Activated T-helper 1 cell treated with anti-CD3 and anti-CD28 coated beads, Interleukin-12 subunit alpha, Interleukin-12 subunit beta, Interleukin-2, Interleukin-4 antibody, amounts not matched to agents 30 ng/mL and 10 ng/mL and 1 ng/mL, durations not matched to agents 14 hours and 24 hours and 36 hours (primary cell): ENCODE measurements at regions of chr2 and their contacts with region 1.

Region 1: GRCh38 chr2:218033590-218034496 is 31.0 kb upstream of the TNS1 start:
- DNase-seq: no peak
- H3K4me3 Mint-ChIP-seq: peak overlapping the region; percentile 53
- H3K27ac Mint-ChIP-seq: no peak overlapping the region
- H3K4me1 Mint-ChIP-seq: peaks cover 3% of the 10 kb centered on the region
- H3K27me3 Mint-ChIP-seq: peaks cover 2% of the 10 kb centered on the region

Region 2: GRCh38 chr2:217886720-217887309 is 147.0 kb before region 1 on chr2:
- intact Hi-C with region 1: loop called (anchors 5 kb)
- DNase-seq: peak; percentile 33
- H3K4me3 Mint-ChIP-seq: no peak overlapping the region
- H3K27ac Mint-ChIP-seq: no peak overlapping the region
- H3K4me1 Mint-ChIP-seq: no peaks in the 10 kb centered on the region
- H3K27me3 Mint-ChIP-seq: peaks cover 5% of the 10 kb centered on the region

Region 3: DNA sequence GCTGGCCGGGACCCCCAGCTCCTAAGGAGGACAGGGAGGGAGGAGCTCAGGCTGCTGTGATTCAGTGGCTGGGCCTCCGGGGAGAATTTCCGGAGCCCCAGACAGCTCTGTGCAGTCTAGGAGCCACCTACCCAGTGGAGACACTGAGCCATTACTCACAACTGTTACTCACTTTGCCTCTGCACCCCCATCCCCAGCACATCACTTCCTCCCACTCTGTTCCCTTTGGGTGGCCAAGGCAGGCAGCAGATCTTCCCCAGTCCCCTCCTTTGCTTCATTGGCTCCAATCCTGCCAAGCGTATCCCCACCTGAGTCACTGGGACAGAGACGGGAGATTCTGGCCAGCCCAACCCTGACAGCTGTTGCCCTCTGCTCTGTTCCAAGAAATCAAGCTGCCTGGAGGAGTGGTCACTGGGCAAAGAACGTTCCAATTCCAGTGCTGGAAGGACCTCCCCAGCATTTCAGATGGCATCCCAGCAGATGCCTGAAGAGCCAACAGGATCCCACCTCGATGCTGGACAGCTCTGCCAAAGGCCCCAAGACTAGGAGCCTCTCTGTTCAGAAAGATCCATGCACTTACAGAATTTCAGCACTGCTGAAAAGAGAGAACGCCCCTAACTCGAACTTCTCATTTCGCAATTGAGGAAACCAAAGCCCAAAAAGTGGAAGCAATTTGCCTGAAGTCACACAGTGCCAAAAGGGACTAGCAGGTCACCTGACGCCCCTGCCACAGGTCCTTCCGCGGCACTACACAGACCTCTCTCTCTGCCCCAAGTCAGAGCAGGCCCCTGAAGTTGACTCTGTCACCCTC is 99.3 kb before region 1 on chr2:
- intact Hi-C with region 1: no loop called
- DNase-seq: no peak
- H3K4me3 Mint-ChIP-seq: no peak overlapping the region
- H3K27ac Mint-ChIP-seq: no peak overlapping the region
- H3K4me1 Mint-ChIP-seq: peaks cover 16% of the 10 kb centered on the region
- H3K27me3 Mint-ChIP-seq: no peaks in the 10 kb centered on the region

Region 4: DNA sequence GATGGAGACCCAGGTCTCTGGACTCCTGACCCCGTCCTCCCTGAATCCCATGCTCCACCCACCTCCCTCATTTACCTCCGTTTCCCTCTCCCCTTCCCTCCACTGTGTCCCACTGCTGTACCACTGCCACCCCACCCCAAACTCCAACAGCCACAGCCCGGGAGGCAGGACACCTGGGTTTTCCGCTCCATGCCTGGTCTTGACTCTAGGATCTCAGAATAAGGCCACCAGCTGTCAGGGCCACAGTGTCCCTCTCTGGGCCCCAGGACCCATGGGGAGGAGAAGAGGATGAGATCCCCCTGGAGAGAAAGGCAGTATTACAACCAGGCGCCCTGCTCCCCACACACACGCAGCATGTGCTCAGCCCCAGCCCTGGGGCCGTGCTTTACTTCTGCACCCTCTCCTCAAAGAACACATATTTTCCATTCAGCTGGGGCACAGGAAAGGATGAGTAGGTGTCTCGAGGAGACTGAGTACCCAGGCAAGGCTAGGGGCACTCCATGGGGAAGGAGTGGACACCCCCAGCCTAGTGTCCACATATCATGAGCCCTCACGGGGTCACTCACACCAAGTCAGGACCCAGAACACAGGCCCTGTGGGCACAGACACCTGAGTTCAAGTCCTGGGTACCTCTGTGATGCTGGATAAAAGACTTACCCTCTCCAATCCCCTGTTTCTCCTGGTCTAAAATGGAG is 35.9 kb after region 1 on chr2:
- intact Hi-C with region 1: loop called (anchors 2 kb)
- DNase-seq: no peak
- H3K4me3 Mint-ChIP-seq: no peak overlapping the region
- H3K27ac Mint-ChIP-seq: no peak overlapping the region
- H3K4me1 Mint-ChIP-seq: peaks cover 8% of the 10 kb centered on the region
- H3K27me3 Mint-ChIP-seq: peaks cover 4% of the 10 kb centered on the region

Region 5: GRCh38 chr2:218095853-218096252 is 62.0 kb after region 1 on chr2:
- intact Hi-C with region 1: no loop called
- DNase-seq: no peak
- H3K4me3 Mint-ChIP-seq: no peak overlapping the region
- H3K27ac Mint-ChIP-seq: no peak overlapping the region
- H3K4me1 Mint-ChIP-seq: no peaks in the 10 kb centered on the region
- H3K27me3 Mint-ChIP-seq: no peaks in the 10 kb centered on the region

Region 6: DNA sequence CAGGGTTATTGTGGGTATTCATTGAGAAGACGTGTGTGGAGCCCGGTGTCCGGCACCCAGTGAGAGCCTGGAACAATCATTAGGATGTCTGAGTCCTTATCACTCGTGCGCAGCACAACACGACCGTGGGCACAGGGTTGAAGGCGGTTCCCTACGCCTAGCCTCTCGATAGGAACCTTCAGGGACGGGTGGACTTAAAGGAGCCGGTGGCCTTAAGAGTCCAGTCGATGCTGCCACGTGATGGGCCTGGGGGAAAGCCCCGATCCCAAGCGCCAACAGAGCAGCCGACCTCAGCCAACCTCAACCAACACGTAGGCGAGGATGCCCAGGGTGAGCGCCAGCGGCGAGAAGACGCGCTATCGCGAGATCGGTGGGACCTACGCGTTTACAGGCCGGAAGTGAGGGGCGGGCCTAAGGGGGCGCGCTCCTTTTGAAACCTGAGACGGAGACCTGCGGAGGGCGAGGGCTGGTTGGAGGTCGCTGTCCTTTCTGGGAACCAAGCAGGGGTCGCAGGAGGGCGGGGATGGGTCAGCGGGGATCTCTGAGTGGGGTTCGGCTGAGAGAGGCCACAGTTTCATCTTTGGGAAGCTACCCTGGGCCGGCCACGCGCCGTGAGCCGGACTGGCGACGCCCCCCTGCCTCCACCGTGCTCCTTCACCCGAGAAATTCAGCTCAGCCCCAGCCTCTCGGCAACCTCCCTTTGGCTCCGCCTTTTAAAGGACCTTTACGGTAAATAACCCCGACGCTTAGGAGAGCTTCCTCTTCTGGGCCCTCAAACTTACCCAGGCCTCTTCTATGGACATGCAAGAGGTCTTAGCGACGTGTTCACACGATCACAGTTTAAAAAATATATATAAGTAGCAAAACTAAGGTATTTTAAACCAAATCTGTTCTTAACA is 875.1 kb after region 1 on chr2:
- intact Hi-C with region 1: no loop called
- DNase-seq: peak; percentile 78
- H3K4me3 Mint-ChIP-seq: peak overlapping the region; percentile 79
- H3K27ac Mint-ChIP-seq: peak overlapping the region; percentile 78
- H3K4me1 Mint-ChIP-seq: peaks cover 18% of the 10 kb centered on the region
- H3K27me3 Mint-ChIP-seq: peaks cover 28% of the 10 kb centered on the region